ENCODE measurements at regions of chr4 and their contacts with region 1.

Region 1: GRCh38 chr4:112099701-112100297 is 45.5 kb upstream of the FAM241A start:
- DNase-seq: no peak
- ATAC-seq: peak; percentile 61 to 86
- H3K4me3 ChIP-seq: no peak overlapping the region
- H3K27ac ChIP-seq: no peak overlapping the region
- H3K4me1 ChIP-seq: no peaks in the 10 kb centered on the region
- H3K27me3 ChIP-seq: no peaks in the 10 kb centered on the region
- CTCF ChIP-seq: peak; percentile 67

Region 2: GRCh38 chr4:112231779-112232713 is 132.2 kb after region 1 on chr4 and contains the start of gene AP1AR:
- intact Hi-C with region 1: loop called (anchors 5 kb)
- DNase-seq: peak; percentile 90
- ATAC-seq: peak; percentile 89 to 91
- H3K4me3 ChIP-seq: peak within 1 kb of the TSS; percentile 90
- H3K27ac ChIP-seq: peak within 1 kb of the TSS; percentile 94
- H3K4me1 ChIP-seq: peaks cover 26% of the 10 kb centered on the region
- H3K27me3 ChIP-seq: no peaks in the 10 kb centered on the region
- CTCF ChIP-seq: peak; percentile 46
- total RNA-seq, gene AP1AR: 15.0 TPM

Measured in lower lobe of right lung (tissue), 2 donors.